ENCODE measurements at regions of chr16 and their contacts with region 1.

Region 1: DNA sequence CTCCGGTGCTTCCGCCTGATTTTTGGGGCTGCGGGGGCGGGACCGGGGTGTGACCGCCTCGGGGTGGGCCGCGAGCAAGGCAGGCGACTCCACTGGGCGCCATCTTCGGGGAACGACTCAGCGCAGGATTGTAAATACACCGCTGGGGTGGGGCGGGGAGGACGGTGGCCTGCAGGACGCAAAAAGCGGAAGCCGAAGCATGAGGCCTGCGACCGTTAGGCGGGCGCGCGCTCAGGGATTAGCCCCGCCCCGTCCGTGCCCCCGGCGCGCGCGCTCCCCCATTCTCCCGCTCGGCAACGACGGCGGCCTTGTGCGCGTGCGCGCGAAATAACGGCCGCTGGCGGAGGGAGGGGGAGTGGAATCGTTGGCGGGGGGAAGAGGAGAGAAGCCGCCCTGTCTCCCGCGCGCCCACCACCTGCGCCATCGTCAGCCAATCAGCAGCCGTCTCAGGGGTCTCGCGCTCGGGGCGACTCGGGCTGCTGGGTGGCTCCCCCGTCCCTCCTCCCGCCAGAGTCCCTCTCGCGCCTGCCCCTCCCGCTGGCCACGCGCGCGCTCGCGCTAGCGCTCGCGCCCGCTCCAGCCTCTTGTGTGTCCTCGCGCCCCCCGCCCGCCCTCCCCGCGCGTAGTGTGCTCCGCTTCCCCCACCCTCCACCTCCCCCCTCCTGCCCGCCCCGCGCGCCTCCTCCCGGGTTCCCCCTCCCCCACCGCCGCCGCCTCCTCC is 791 bp upstream of the MAZ start:
- DNase-seq: no peak
- H3K4me3 ChIP-seq: peak overlapping the region; percentile 81 to 91
- H3K27ac ChIP-seq: peak overlapping the region; percentile 98
- H3K4me1 ChIP-seq: peaks cover 45% of the 10 kb centered on the region
- H3K27me3 ChIP-seq: no peaks in the 10 kb centered on the region
- CTCF ChIP-seq: no peak
- POLR2A ChIP-seq: peak in 1 of 2 donors; percentile 92

Region 2: GRCh38 chr16:29790183-29790952 is 15.2 kb before region 1 on chr16 and contains the start of gene KIF22:
- intact Hi-C with region 1: no loop called
- DNase-seq: peak in 1 of 2 donors; percentile 97
- H3K4me3 ChIP-seq: peak within 1 kb of the TSS; percentile 69
- H3K27ac ChIP-seq: peak within 1 kb of the TSS; percentile 91
- H3K4me1 ChIP-seq: peaks cover 28% of the 10 kb centered on the region
- H3K27me3 ChIP-seq: no peaks in the 10 kb centered on the region
- CTCF ChIP-seq: peak; percentile 63 to 78 (median 67)
- POLR2A ChIP-seq: peak in 1 of 2 donors; percentile 64
- total RNA-seq, gene KIF22: 18.9 TPM

Region 3: GRCh38 chr16:30378236-30379204 is 573.0 kb after region 1 on chr16:
- intact Hi-C with region 1: loop called (anchors 5 kb)
- DNase-seq: peak; percentile 91 to 99
- H3K4me3 ChIP-seq: peak overlapping the region; percentile 75 to 81
- H3K27ac ChIP-seq: peak overlapping the region; percentile 99
- H3K4me1 ChIP-seq: peaks cover 32% of the 10 kb centered on the region
- H3K27me3 ChIP-seq: no peaks in the 10 kb centered on the region
- CTCF ChIP-seq: no peak
- POLR2A ChIP-seq: peak in 1 of 2 donors; percentile 68